ENCODE measurements at regions of chr20 and their contacts with region 1.

Region 1: DNA sequence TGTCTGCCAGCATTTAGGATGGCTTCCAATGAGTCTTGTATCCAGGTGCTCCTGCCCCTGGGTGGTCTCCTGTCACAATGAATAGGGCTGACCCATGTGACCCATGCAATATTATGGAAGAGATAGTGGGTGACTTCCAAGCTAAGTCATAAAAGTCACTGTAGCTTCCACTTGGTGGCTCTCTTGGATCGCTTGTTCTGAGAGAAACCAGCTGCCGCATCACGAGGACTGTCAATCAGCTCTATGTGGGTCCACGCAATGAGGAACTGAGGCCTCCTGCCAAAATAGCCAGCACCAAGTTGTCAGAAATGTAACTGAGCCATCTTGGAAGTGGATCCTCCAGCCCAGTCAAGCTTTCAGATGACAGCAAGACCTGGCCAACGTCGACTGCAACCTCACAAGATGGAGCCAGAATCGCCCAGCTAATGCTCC is 14.9 kb upstream of the MATN4 start:
- DNase-seq: peak in 1 of 2 experiments; percentile 63
- ATAC-seq: peak; percentile 61 to 71
- H3K4me3 ChIP-seq: no peak overlapping the region
- H3K27ac ChIP-seq: no peak overlapping the region
- H3K4me1 ChIP-seq: no peaks in the 10 kb centered on the region; the same call in 2 of the 3 replicates
- CTCF ChIP-seq: peak; percentile 59
- EP300 ChIP-seq: no peak
- POLR2A ChIP-seq: no peak
- RAD21 ChIP-seq: peak; percentile 81 to 82

Region 2: GRCh38 chr20:45311589-45312211 is 11.3 kb before region 1 on chr20:
- CTCF ChIA-PET with region 1: interaction called, 17 read pairs
- POLR2A ChIA-PET with region 1: no interaction called
- DNase-seq: peak; percentile 75 to 78
- ATAC-seq: peak; percentile 79 to 94
- H3K4me3 ChIP-seq: no peak overlapping the region; the same call in 2 of the 3 replicates
- H3K27ac ChIP-seq: peak overlapping the region in 1 of 2 experiments; percentile 41; a peak in 1 of 6 replicates
- H3K4me1 ChIP-seq: no peaks in the 10 kb centered on the region
- CTCF ChIP-seq: peak; percentile 77
- EP300 ChIP-seq: no peak
- POLR2A ChIP-seq: no peak
- RAD21 ChIP-seq: peak; percentile 60 to 68

Region 3: DNA sequence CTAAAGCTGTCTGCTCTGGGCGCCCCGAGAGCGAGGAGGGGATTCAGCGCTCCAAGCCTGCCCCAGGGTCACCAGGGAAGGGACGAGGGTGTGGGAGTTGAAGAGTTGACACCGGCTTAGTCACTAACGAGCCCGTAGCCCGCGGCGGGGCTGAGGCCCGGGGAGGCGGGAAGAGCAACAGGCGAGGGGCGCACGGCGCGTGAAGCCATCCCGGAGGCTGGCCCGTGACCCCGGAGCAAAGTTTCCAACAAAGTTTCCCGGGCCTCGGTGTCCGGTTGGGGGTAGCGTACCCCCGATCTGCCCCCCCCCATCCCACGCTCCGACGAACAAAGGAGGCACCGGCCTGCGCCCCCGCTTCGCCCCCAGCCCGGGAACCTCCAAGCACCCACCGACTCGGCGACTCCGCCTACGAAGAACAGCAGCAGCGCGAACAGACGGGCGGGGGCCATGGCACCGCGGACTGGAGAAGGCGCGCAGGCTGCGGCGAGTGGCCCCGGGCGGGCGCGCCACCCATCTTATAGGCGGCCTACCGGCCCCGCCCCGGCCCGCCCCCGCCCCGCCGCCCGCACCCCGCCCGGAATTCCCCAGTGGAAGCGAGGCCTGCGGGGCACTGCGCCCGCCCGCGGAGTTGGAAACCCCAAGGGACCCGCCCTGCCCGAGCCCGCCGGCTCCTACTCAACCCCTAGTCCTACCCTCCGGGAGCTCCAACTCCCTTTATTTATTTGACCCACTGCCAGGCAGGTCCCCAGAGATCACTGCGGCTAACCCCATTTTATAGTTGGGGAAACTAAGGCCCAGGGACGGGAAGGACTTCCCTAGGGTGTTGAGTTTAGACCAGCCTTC is 25.2 kb after region 1 on chr20 and contains the start of gene SDC4:
- CTCF ChIA-PET with region 1: interaction called, 18 read pairs
- POLR2A ChIA-PET with region 1: interaction called, 3 read pairs
- DNase-seq: peak; percentile 51 to 74
- ATAC-seq: peak; percentile 72 to 81
- H3K4me3 ChIP-seq: peak within 1 kb of the TSS; percentile 86
- H3K27ac ChIP-seq: peak within 1 kb of the TSS; percentile 92 to 96
- H3K4me1 ChIP-seq: peaks cover 52% of the 10 kb centered on the region
- CTCF ChIP-seq: no peak
- EP300 ChIP-seq: no peak
- POLR2A ChIP-seq: peak; percentile 99
- RAD21 ChIP-seq: no peak
- polyA plus RNA-seq, gene SDC4: 27.4 and 29.0 TPM in 2 replicates

Region 4: DNA sequence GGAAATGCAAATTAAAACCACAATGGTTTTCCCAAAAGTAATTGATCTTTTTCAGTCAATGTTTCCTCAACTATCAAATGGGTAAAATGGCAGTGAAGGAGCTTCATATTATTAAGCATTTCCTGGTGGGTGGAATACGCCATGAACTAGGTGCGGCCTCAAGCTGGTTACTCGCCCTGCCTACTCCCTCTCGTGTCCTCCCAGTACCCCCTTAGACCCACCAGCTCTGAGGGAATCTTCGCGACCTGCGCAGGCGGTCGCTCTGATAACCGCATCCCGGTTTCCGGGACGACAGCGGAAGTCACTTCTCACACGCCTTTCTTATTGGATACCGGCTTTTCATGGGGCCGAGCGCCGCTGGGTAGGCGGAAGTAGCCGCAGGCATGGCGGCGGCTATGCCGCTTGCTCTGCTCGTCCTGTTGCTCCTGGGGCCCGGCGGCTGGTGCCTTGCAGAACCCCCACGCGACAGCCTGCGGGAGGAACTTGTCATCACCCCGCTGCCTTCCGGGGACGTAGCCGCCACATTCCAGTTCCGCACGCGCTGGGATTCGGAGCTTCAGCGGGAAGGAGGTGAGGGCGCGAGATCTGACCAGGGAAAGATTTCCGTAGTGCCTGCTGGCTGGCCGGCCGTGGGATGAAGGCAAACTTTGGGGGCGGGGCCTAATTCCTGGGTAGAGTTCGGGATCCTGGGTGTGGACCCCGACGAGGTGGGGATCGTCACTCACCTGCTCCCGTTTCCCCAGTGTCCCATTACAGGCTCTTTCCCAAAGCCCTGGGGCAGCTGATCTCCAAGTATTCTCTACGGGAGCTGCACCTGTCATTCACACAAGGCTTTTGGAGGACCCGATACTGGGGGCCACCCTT is 93.0 kb after region 1 on chr20 and contains the start of gene PIGT:
- CTCF ChIA-PET with region 1: interaction called, 18 read pairs
- POLR2A ChIA-PET with region 1: no interaction called
- DNase-seq: peak; percentile 81 to 84
- ATAC-seq: peak; percentile 84 to 93
- H3K4me3 ChIP-seq: peak within 1 kb of the TSS; percentile 92
- H3K27ac ChIP-seq: peak within 1 kb of the TSS; percentile 91
- H3K4me1 ChIP-seq: peaks cover 39% of the 10 kb centered on the region
- CTCF ChIP-seq: no peak
- EP300 ChIP-seq: no peak
- POLR2A ChIP-seq: peak; percentile 93
- RAD21 ChIP-seq: no peak
- polyA plus RNA-seq, gene PIGT: 60.3 and 79.6 TPM in 2 replicates

Region 5: GRCh38 chr20:45751721-45752120 is 428.8 kb after region 1 on chr20:
- CTCF ChIA-PET with region 1: interaction called, 12 read pairs
- POLR2A ChIA-PET with region 1: no interaction called
- DNase-seq: no peak
- ATAC-seq: no peak
- H3K4me3 ChIP-seq: no peak overlapping the region
- H3K27ac ChIP-seq: no peak overlapping the region
- H3K4me1 ChIP-seq: no peaks in the 10 kb centered on the region
- CTCF ChIP-seq: no peak
- EP300 ChIP-seq: no peak
- POLR2A ChIP-seq: no peak
- RAD21 ChIP-seq: no peak